Prostate gland (tissue), 2 donors: ENCODE measurements at regions of chr20 and their contacts with region 1.

Region 1: GRCh38 chr20:4108495-4109306 is 93.3 kb upstream of the RNF24 start:
- DNase-seq: peak; percentile 71
- H3K4me3 ChIP-seq: no peak overlapping the region
- H3K27ac ChIP-seq: no peak overlapping the region
- H3K4me1 ChIP-seq: no peaks in the 10 kb centered on the region
- H3K27me3 ChIP-seq: no peaks in the 10 kb centered on the region
- CTCF ChIP-seq: peak; percentile 69 to 98 (median 94)
- POLR2A ChIP-seq: no peak

Region 2: DNA sequence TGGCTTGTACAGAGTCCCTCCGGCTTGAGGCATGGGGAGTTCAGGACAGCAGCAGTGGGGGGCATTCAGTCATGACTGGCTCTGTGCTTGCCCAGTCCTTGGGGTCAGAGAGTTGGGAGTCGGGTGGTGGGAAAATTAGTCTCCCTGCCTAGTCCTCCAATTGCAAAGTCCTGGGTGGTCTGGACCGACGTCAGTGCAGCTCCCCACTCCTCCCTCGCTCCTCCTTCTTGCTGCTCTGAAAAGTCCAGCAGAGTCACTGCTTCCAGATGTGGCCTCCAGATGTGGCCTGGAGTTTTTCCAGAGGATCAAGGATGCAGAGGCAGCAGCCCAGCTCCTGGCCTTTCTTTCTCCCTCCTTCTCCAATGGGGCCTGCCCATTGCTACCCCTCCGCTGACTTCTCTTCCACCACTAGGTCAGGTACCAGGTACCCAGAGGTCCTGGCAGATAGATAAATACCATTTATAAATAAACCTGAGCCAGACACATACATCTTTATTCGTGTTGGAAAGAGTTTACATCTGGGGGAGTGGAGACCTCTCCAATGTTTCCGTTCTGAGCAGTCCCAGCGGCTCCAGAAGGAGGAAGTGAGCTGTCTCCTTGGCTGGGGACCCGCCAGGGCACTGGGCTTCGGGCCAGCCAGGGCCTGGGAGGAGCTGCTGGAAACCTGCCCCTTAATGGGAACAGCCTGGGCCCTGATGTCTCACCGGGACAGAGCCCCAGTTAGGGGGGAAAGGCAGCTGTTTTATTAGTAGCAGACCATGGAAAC is 44.4 kb before region 1 on chr20:
- intact Hi-C with region 1: no loop called
- DNase-seq: peak; percentile 91
- H3K4me3 ChIP-seq: no peak overlapping the region
- H3K27ac ChIP-seq: peak overlapping the region; percentile 66 to 75
- H3K4me1 ChIP-seq: peaks cover 4% of the 10 kb centered on the region
- H3K27me3 ChIP-seq: no peaks in the 10 kb centered on the region
- CTCF ChIP-seq: peak in 1 of 4 experiments; percentile 3
- POLR2A ChIP-seq: no peak

Region 3: DNA sequence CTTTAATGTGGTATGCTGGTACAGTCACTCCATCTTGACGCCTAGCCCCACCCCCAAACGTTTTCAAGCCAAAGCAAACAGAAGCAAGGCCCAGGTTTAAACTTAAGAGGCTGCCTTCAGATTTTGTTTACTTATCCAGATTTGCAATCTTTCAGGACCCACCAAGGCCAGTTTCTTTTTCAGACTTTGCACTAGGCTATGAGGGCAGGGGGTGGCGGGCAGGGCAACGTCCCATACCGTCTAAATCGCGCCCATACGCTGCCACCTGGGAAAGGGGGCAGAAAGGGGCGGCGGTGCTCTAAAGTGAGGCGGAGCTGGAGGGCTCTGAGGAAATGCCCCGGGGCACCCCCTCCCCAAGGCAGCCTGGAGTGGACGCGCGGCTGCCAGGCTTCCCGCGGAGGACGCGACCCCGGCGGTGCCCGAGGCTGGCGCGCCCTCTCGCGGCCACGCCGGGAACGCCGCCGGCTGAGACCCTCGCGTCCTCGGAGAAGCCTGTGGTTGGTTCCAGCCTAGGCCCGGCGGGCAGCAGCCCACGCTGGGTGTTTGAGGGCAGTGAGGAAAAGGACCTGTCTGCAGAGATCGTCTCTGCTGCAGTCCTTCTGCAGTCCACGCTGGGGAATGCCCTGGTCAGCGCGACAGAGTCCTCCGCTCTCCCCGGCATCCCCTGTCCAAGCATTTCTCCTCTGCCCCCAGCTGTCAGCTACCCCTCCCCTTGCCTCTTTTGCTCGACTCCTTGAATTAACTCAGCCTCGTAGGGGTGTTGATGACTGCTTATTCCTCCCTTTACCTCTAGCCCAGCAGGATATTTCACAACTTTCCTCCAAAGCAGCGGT is 483.8 kb after region 1 on chr20:
- intact Hi-C with region 1: loop called (anchors 10 kb)
- DNase-seq: no peak
- H3K4me3 ChIP-seq: peak overlapping the region; percentile 20 to 26
- H3K27ac ChIP-seq: no peak overlapping the region
- H3K4me1 ChIP-seq: peaks cover 4% of the 10 kb centered on the region
- H3K27me3 ChIP-seq: no peaks in the 10 kb centered on the region
- CTCF ChIP-seq: peak; percentile 79 to 92 (median 82)
- POLR2A ChIP-seq: no peak

Region 4: DNA sequence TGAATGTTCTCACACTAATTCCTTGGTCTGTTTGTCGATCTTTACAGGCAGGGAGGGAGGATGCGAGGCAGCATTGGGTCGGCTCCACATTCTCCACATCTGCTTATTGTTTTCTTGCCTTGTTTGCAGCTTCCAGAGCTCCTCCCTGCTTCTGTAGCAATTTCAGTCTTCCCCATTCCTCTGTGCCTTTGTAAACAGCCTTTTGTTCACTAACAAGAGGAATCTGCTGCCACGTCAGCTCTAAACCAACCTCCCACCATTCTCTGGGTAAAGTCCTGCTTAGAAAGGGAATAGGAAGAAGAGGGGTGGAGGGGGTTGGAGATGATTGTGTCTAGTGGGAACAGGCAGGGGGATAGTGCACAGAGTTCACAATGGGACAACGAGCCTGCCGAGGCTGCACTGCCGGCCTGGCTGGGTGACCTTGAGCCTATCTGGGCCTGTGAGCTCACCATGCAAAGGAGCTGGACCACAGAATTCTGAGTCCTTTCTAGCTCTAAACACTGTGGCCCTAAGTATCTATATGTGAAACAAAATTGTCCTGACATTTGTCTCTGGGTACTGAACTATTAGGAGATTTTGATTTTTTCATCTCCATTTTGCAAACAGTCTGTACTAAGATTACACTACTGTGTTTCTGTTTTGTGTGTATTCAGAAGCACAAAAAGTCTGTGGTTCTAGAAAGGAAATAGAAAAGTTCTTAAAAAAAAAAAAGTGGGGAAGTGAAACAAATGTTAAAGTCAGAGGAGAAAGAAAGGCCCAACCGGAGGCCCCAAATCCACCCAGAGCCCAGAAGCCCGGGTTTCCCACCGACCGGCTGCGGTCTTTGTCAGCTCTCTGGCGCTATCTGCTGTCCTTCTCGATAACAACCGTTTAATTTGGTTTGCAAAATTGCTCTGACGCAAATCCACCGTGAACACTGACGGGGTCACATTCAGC is 611.6 kb after region 1 on chr20:
- intact Hi-C with region 1: loop called (anchors 5 kb)
- DNase-seq: peak; percentile 52
- H3K4me3 ChIP-seq: no peak overlapping the region
- H3K27ac ChIP-seq: peak overlapping the region in 1 of 2 donors; percentile 37
- H3K4me1 ChIP-seq: no peaks in the 10 kb centered on the region
- H3K27me3 ChIP-seq: no peaks in the 10 kb centered on the region
- CTCF ChIP-seq: peak; percentile 42 to 85 (median 68)
- POLR2A ChIP-seq: no peak